ENCODE measurements at regions of chr17 and their contacts with region 1.

Region 1: GRCh38 chr17:1716076-1716995 is 6.2 kb upstream of the TLCD2 start:
- DNase-seq: peak; percentile 100
- ATAC-seq: peak; percentile 90
- H3K4me3 ChIP-seq: peak overlapping the region; percentile 72 to 78
- H3K4me3 Mint-ChIP-seq: peak overlapping the region; percentile 94
- H3K27ac ChIP-seq: peak overlapping the region; percentile 65 to 88
- H3K27ac Mint-ChIP-seq: peak overlapping the region; percentile 90
- H3K4me1 ChIP-seq: peaks cover 26% of the 10 kb centered on the region
- H3K4me1 Mint-ChIP-seq: peaks cover 26% of the 10 kb centered on the region
- H3K27me3 ChIP-seq: peaks cover 3 to 4% of the 10 kb centered on the region in 2 experiments
- H3K27me3 Mint-ChIP-seq: peaks cover 2% of the 10 kb centered on the region
- CTCF ChIP-seq: no peak

Region 2: DNA sequence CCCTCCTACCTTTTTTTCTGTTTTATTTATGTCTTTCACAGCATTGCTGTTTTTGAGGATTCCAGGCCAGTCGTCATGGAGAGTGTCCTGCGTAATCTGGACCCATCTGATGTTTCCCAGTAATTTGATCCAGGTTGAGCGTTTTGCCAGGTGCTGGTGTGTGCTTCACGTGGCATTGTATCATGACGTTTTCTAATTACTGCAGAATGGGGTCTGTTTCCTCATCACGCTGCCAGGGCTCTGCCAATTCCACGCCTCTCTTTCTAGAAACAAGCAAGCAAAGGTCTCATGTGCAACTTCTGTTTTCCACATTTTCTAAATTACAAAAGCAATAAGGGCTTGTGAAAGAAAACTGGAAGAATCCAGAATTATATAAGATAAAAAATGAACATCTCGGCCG is 474.4 kb before region 1 on chr17:
- CTCF ChIA-PET with region 1: no interaction called
- POLR2A ChIA-PET with region 1: no interaction called
- intact Hi-C with region 1: no loop called
- DNase-seq: no peak
- ATAC-seq: no peak
- H3K4me3 ChIP-seq: no peak overlapping the region
- H3K4me3 Mint-ChIP-seq: no peak overlapping the region
- H3K27ac ChIP-seq: no peak overlapping the region
- H3K27ac Mint-ChIP-seq: no peak overlapping the region
- H3K4me1 ChIP-seq: peaks cover 16% of the 10 kb centered on the region
- H3K4me1 Mint-ChIP-seq: peaks cover 18% of the 10 kb centered on the region
- H3K27me3 ChIP-seq: no peaks in the 10 kb centered on the region
- H3K27me3 Mint-ChIP-seq: peaks cover 18% of the 10 kb centered on the region
- CTCF ChIP-seq: no peak

Region 3: DNA sequence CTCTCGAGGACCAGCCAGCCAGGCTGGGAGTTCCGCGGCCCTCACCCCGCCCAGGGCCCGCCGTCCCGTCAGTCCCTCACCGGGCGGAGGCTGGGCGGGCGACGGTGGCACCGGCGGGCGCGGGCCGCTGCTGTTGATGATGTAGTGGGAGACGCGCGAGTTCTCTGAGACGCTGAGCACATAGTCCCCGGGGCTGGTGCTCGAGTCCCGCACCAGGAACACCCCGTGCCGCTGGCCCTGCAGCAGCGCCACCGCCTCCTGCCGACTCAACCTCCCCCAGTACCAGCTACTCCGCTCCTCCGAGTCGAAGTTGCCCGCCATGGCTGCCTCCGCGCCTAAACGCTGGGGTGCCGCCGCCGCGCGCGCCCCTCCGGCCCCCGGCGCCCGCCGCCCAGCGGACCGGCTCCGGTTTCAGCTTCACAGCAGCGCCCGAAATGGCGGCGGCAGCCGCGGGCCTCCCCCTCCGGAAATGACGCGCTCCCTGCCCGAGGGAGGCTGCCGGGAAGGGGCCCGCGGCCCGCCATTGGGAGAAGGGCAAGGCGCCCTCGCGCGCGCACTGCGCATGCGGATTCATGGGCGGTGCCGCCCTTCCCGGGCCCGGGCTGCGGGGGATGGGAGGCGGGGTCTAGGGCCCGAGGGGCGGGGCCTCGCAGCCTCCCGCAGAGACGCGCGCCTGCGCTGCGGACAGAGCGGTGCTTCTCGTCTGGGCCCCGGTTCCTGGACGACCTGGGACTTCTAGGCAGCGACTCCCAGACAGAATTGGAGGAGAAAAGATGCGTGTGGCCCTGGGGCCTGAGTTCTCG is 260.3 kb before region 1 on chr17 and contains the start of gene CRK:
- CTCF ChIA-PET with region 1: no interaction called
- POLR2A ChIA-PET with region 1: no interaction called
- intact Hi-C with region 1: loop called in 1 of 2 experiments (anchors 2 kb)
- DNase-seq: peak; percentile 95 to 100 (median 99)
- ATAC-seq: peak; percentile 95
- H3K4me3 ChIP-seq: peak within 1 kb of the TSS; percentile 80 to 94
- H3K4me3 Mint-ChIP-seq: peak within 1 kb of the TSS; percentile 92
- H3K27ac ChIP-seq: peak within 1 kb of the TSS; percentile 92 to 93
- H3K27ac Mint-ChIP-seq: peak within 1 kb of the TSS; percentile 91
- H3K4me1 ChIP-seq: peaks cover 43% of the 10 kb centered on the region
- H3K4me1 Mint-ChIP-seq: peaks cover 46% of the 10 kb centered on the region
- H3K27me3 ChIP-seq: peaks cover 0 to 10% of the 10 kb centered on the region in 2 experiments
- H3K27me3 Mint-ChIP-seq: peaks cover 10% of the 10 kb centered on the region
- CTCF ChIP-seq: no peak
- total RNA-seq, gene CRK: 15.4 to 15.9 TPM

Region 4: GRCh38 chr17:1628856-1629646 is 87.3 kb before region 1 on chr17:
- CTCF ChIA-PET with region 1: no interaction called
- POLR2A ChIA-PET with region 1: interaction called, 4 read pairs
- intact Hi-C with region 1: loop called in 1 of 2 experiments (anchors 2 kb)
- DNase-seq: peak; percentile 81 to 95 (median 91)
- ATAC-seq: peak; percentile 70
- H3K4me3 ChIP-seq: peak overlapping the region; percentile 70 to 90
- H3K4me3 Mint-ChIP-seq: peak overlapping the region; percentile 95
- H3K27ac ChIP-seq: peak overlapping the region; percentile 43 to 79
- H3K27ac Mint-ChIP-seq: peak overlapping the region; percentile 90
- H3K4me1 ChIP-seq: peaks cover 20% of the 10 kb centered on the region
- H3K4me1 Mint-ChIP-seq: peaks cover 19% of the 10 kb centered on the region
- H3K27me3 ChIP-seq: no peaks in the 10 kb centered on the region
- H3K27me3 Mint-ChIP-seq: no peaks in the 10 kb centered on the region
- CTCF ChIP-seq: no peak

Region 5: GRCh38 chr17:1684378-1685189 is 31.8 kb before region 1 on chr17 and contains the start of gene PRPF8:
- CTCF ChIA-PET with region 1: no interaction called
- POLR2A ChIA-PET with region 1: interaction called, 12 read pairs
- intact Hi-C with region 1: loop called (anchors 1 kb)
- DNase-seq: peak; percentile 97 to 99 (median 98)
- ATAC-seq: peak; percentile 98
- H3K4me3 ChIP-seq: peak within 1 kb of the TSS; percentile 78 to 85
- H3K4me3 Mint-ChIP-seq: peak within 1 kb of the TSS; percentile 98
- H3K27ac ChIP-seq: peak within 1 kb of the TSS; percentile 92 to 95
- H3K27ac Mint-ChIP-seq: peak within 1 kb of the TSS; percentile 99
- H3K4me1 ChIP-seq: peaks cover 22% of the 10 kb centered on the region
- H3K4me1 Mint-ChIP-seq: peaks cover 53% of the 10 kb centered on the region
- H3K27me3 ChIP-seq: no peaks in the 10 kb centered on the region
- H3K27me3 Mint-ChIP-seq: no peaks in the 10 kb centered on the region
- CTCF ChIP-seq: no peak
- total RNA-seq, gene PRPF8: 572 to 611 TPM

Region 6: DNA sequence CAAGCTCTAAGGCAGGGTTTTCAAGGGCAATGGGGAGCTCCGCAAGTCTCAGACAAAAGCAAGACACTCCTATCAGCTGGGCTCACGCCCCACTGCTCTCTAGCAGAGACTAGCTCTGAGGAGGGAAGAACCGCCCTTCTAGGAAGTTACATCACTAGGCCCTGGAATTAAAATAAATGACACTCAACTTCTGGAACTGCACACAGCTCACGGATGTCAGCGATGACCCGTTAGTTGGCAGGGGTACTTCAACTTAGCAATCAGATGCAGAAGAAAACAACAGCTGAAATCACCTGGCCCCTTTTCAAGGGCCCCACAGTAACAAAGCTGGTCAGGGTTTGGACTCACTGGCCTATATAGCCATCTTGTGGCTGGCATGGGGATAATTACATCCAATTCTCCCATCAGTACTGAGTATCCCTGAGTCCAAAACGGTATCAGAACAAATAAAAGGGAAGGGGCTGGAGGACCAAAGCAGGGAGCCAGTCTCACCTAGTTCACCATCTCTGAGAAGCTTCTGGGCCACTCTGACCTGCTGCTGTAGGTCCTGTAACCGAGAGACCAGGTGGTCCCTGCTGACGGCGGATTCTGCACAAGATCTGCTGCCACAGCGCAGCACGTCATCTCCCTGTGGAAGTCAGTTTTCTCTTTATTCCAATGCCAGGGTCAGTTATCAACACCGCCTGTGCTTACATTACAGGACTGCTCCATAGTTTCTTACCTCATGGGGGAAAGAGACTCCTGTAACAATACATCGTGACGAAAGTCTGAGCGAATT is 67.7 kb after region 1 on chr17:
- CTCF ChIA-PET with region 1: interaction called, 144 read pairs
- POLR2A ChIA-PET with region 1: interaction called, 7 read pairs
- intact Hi-C with region 1: loop called (anchors 1 kb)
- DNase-seq: peak in 2 of 9 experiments; percentile 36 to 52
- ATAC-seq: peak; percentile 58
- H3K4me3 ChIP-seq: no peak overlapping the region
- H3K4me3 Mint-ChIP-seq: no peak overlapping the region
- H3K27ac ChIP-seq: no peak overlapping the region
- H3K27ac Mint-ChIP-seq: no peak overlapping the region
- H3K4me1 ChIP-seq: no peaks in the 10 kb centered on the region
- H3K4me1 Mint-ChIP-seq: peaks cover 4% of the 10 kb centered on the region
- H3K27me3 ChIP-seq: no peaks in the 10 kb centered on the region
- H3K27me3 Mint-ChIP-seq: no peaks in the 10 kb centered on the region
- CTCF ChIP-seq: no peak

Region 7: DNA sequence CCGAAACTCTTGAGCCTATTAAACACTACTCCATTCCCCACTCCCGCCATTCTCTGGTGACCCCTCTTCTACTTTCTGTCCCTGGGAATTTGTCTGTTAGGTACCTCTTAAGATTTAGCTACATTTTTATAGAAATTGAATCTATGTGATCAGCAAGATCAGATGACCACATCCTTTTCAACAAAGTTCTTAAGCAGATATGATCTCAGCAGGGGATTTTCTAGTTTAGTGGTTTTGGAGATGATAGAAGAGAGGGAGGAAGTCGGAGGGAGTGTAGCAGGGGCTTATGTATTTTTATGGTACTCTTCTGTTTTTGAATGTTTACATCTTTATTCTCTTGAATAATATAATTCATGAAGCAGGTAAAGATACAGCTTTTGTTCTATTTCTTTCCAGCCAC is 154.3 kb after region 1 on chr17:
- CTCF ChIA-PET with region 1: interaction called, 41 read pairs
- POLR2A ChIA-PET with region 1: no interaction called
- intact Hi-C with region 1: loop called (anchors 1 to 2 kb)
- DNase-seq: peak in 2 of 9 experiments; percentile 66 to 84
- ATAC-seq: peak; percentile 79
- H3K4me3 ChIP-seq: peak overlapping the region in 1 of 2 experiments; percentile 31
- H3K4me3 Mint-ChIP-seq: peak overlapping the region; percentile 62
- H3K27ac ChIP-seq: peak overlapping the region; percentile 64 to 66
- H3K27ac Mint-ChIP-seq: peak overlapping the region; percentile 97
- H3K4me1 ChIP-seq: peaks cover 47% of the 10 kb centered on the region
- H3K4me1 Mint-ChIP-seq: peaks cover 44% of the 10 kb centered on the region
- H3K27me3 ChIP-seq: no peaks in the 10 kb centered on the region
- H3K27me3 Mint-ChIP-seq: no peaks in the 10 kb centered on the region
- CTCF ChIP-seq: no peak

Region 8: DNA sequence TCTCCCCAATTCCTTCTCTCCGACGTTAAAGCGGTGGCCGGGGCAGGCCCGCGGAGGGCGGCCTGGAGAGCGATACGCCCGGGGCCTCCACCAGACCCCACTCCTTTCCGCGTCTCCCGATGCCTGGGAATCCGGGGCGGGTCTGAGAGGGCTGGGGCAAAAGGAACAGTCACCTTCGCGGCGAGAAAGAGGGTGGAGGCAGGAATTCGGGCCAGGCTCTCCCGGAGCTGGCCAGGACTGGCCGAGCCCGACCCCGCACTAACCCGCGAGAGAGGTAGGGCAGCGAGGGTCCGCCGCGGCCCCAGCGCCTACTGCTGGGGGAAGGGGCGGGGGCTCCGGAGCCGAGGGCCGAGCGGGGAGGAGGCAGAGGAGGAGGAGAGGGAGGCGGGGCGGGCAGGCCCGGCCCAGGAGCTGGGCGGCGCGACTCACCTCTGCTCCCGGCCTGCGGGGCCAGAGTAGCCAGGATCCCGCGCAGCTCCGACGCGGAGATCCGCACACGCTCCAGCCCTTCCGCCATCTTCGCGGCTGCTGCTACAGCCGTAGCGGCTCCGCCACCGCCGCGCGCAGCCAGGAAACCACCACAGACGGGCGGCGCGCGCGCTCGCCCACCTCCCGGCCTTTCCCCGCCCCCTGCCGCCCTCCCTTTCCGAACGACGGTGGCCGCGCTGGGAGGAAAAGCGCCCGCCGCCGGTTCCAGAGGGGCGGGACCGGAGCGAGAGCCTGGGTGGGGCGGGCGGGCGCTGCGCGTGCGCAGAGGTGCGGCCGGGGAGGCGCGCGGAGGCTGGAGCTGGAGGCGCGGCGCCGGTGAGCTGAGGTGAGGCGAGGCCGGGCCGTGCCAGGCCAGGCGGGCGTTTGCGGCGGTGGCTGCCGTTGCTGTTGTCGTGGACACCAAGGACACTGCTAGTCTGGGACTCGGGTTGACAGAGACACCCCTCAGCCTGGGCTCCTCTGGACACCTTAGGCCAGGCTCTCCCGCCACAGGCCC is 587.2 kb after region 1 on chr17 and contains the starts of genes SMG6 and SRR:
- CTCF ChIA-PET with region 1: no interaction called
- POLR2A ChIA-PET with region 1: no interaction called
- intact Hi-C with region 1: loop called in 1 of 2 experiments (anchors 10 kb)
- DNase-seq: peak; percentile 89 to 98 (median 95)
- ATAC-seq: peak; percentile 91
- H3K4me3 ChIP-seq: peak within 1 kb of the TSS; percentile 95 to 98
- H3K4me3 Mint-ChIP-seq: peak within 1 kb of the TSS; percentile 93
- H3K27ac ChIP-seq: peak within 1 kb of the TSS; percentile 76 to 85
- H3K27ac Mint-ChIP-seq: peak within 1 kb of the TSS; percentile 91
- H3K4me1 ChIP-seq: peaks cover 18% of the 10 kb centered on the region
- H3K4me1 Mint-ChIP-seq: peaks cover 43% of the 10 kb centered on the region
- H3K27me3 ChIP-seq: no peaks in the 10 kb centered on the region
- H3K27me3 Mint-ChIP-seq: no peaks in the 10 kb centered on the region
- CTCF ChIP-seq: no peak
- total RNA-seq, gene SMG6: 36.1 to 37.8 TPM
- total RNA-seq, gene SRR: 1.8 to 2.9 TPM